ENCODE measurements at regions of chr1 and their contacts with region 1.

Region 1: GRCh38 chr1:203267347-203267846 is 37.9 kb upstream of the BTG2 start:
- DNase-seq: peak; percentile 98
- H3K4me3 Mint-ChIP-seq: peak overlapping the region; percentile 77
- H3K27ac Mint-ChIP-seq: no peak overlapping the region
- H3K4me1 Mint-ChIP-seq: peaks cover 12% of the 10 kb centered on the region
- H3K27me3 Mint-ChIP-seq: peaks cover 14% of the 10 kb centered on the region
- CTCF ChIP-seq: peak; percentile 99

Region 2: DNA sequence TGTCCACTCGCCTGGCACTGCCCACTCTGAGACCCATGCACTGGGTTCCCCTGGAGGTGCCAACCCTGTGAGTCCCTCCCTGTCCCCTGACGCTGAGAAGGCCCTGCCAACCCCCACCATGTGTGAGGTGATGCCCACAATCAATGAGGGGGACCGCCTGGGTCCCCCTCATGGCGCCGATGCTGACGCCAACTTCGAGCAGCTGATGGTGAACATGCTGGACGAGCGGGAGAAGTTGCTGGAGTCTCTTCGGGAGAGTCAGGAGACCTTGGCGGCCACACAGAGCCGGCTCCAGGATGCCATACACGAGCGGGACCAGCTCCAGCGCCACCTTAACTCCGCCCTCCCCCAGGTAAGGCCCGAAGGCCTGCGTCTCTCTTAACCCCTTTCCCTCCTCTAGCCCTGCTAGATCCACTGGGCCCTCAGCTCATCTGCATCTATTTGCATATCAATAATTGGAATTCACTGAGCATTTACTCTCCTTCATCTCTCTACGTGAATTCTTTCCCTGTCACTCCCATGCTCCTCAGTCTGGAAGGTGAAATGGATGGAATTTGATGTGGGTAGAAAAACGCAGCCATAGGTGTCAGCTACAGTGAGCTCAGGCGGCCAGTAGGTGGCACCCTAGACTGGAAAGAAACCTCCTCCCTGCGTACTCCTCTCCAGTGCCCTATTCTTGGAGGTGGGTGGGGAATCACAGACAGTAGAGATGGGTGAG is 228.3 kb before region 1 on chr1:
- CTCF ChIA-PET with region 1: interaction called, 408 read pairs
- POLR2A ChIA-PET with region 1: interaction called, 20 read pairs
- intact Hi-C with region 1: loop called (anchors 1 kb)
- DNase-seq: peak; percentile 90
- H3K4me3 Mint-ChIP-seq: no peak overlapping the region
- H3K27ac Mint-ChIP-seq: no peak overlapping the region
- H3K4me1 Mint-ChIP-seq: peaks cover 18% of the 10 kb centered on the region
- H3K27me3 Mint-ChIP-seq: no peaks in the 10 kb centered on the region
- CTCF ChIP-seq: peak; percentile 100

Region 3: DNA sequence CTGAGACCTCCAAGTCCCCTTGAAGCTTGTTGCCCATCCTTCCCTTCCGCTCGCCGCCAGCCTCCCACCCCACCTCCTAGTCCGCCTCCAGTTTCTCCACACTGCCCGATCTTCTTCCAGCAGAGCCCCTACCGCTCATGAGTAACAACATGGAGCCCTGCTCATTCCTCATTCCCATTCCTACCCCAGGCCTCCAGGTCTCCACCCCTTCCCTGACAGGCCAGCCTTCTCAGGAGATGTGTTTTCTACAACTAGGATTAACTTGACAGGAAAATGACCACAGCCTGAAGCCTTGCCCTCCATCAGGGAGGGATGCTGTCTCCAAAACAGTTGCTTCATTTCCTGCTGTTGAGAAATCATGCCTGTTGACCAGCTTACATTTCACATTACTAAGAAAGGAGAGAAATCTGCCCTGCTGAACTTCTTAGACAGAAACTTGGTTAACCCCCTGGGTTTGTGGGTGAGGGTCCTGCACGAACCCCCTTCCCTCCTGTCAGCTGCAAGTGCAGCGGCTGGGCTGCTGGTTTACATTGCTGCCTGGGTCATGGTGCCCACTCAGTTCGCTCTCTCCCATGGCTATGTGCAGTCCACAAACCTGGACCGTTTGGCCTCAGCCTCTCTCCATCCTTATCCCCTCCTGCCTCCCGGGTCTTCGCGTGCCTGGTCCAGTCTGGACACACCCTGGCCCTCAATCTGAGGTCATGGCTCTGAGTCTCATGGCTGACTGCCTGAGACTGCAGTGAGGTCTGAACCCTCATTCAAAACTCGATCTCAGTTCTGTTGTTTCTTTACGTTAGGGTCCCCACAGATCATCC is 64.8 kb before region 1 on chr1:
- CTCF ChIA-PET with region 1: interaction called, 23 read pairs
- POLR2A ChIA-PET with region 1: interaction called, 10 read pairs
- intact Hi-C with region 1: no loop called
- DNase-seq: peak; percentile 97
- H3K4me3 Mint-ChIP-seq: no peak overlapping the region
- H3K27ac Mint-ChIP-seq: no peak overlapping the region
- H3K4me1 Mint-ChIP-seq: peaks cover 22% of the 10 kb centered on the region
- H3K27me3 Mint-ChIP-seq: peaks cover 7% of the 10 kb centered on the region
- CTCF ChIP-seq: no peak

Region 4: DNA sequence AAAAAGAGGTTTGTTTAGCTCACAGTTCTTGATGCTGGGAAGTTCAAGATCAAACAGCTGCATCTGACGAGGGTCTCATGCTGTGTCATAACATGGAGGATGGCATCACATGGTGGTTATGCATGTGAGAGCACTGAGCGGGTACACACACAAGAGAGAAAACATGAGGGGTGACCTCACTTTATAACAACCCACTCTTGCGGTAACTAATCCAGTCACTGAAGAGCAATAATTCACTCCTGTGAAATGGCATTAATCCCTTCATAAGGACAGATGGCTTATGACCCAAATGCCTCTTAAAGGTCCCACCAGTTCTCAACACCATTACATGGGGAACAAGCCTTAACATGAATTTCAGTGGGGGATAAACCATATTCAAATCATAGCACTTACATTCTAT is 14.7 kb before region 1 on chr1:
- CTCF ChIA-PET with region 1: interaction called, 68 read pairs
- POLR2A ChIA-PET with region 1: interaction called, 19 read pairs
- intact Hi-C with region 1: no loop called
- DNase-seq: no peak
- H3K4me3 Mint-ChIP-seq: no peak overlapping the region
- H3K27ac Mint-ChIP-seq: no peak overlapping the region
- H3K4me1 Mint-ChIP-seq: peaks cover 7% of the 10 kb centered on the region
- H3K27me3 Mint-ChIP-seq: peaks cover 79% of the 10 kb centered on the region
- CTCF ChIP-seq: no peak

Region 5: GRCh38 chr1:203351037-203352013 is 83.9 kb after region 1 on chr1 and contains the start of gene FMOD:
- CTCF ChIA-PET with region 1: interaction called, 980 read pairs
- POLR2A ChIA-PET with region 1: no interaction called
- intact Hi-C with region 1: no loop called
- DNase-seq: peak; percentile 23
- H3K4me3 Mint-ChIP-seq: no peak within 1 kb of the TSS
- H3K27ac Mint-ChIP-seq: no peak within 1 kb of the TSS
- H3K4me1 Mint-ChIP-seq: no peaks in the 10 kb centered on the region
- H3K27me3 Mint-ChIP-seq: peaks cover 93% of the 10 kb centered on the region
- CTCF ChIP-seq: peak; percentile 19
- total RNA-seq, gene FMOD: not detected in 2 replicates

Region 6: DNA sequence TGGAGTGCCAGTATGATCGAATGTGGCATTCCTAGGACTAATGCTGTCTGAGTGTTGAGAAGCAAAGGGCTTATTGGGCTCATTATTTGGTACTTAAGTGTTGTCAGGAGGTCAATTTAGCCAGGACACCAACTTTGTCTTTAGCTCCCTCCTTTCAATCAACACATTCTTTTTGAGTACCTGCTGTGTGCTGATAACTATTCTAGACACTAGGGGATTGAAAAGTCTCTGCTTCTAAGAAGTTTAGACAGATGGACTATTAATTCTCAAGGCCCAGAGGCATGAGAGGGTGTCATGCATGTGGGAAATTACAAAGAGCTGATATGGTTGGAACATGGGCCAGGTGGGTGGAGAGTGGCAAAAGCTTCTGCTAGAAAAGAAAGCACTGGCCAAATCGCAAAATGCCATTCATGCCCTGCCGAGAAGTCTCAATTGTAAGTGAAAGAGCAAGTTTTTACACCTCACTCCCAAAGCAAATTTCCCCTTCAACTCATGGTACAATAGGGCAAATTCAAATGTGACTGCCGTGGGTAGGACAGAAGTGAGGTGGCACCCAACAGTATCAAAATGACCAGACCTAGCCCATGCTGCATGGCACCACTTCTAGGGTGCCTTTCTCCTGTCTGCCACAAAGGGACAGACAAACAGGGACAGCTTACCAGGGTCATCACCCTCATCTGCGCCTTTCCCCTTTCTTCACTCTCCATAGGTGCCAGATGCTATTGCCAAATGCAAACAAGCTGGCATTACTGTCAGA is 444.0 kb after region 1 on chr1:
- CTCF ChIA-PET with region 1: interaction called, 11 read pairs
- POLR2A ChIA-PET with region 1: no interaction called
- intact Hi-C with region 1: no loop called
- DNase-seq: no peak
- H3K4me3 Mint-ChIP-seq: no peak overlapping the region
- H3K27ac Mint-ChIP-seq: no peak overlapping the region
- H3K4me1 Mint-ChIP-seq: peaks cover 7% of the 10 kb centered on the region
- H3K27me3 Mint-ChIP-seq: no peaks in the 10 kb centered on the region
- CTCF ChIP-seq: no peak